CD8-positive, alpha-beta T cell (primary cell): ENCODE measurements at regions of chr14 and their contacts with region 1.

Region 1: GRCh38 chr14:60331201-60332045 is 82.4 kb downstream of the PPM1A start:
- DNase-seq: peak; percentile 51 to 86 (median 80)
- ATAC-seq: peak; percentile 80
- H3K4me3 ChIP-seq: peak overlapping the region; percentile 52 to 55
- H3K4me3 Mint-ChIP-seq: peak overlapping the region; percentile 98
- H3K27ac ChIP-seq: peak overlapping the region; percentile 36 to 47
- H3K27ac Mint-ChIP-seq: peak overlapping the region; percentile 94
- H3K4me1 ChIP-seq: peaks cover 9% of the 10 kb centered on the region
- H3K4me1 Mint-ChIP-seq: peaks cover 33% of the 10 kb centered on the region
- H3K27me3 ChIP-seq: no peaks in the 10 kb centered on the region
- H3K27me3 Mint-ChIP-seq: peaks cover 30% of the 10 kb centered on the region
- CTCF ChIP-seq: peak; percentile 87

Region 2: GRCh38 chr14:60064491-60065072 is 266.8 kb before region 1 on chr14:
- CTCF ChIA-PET with region 1: interaction called, 5 read pairs
- POLR2A ChIA-PET with region 1: no interaction called
- intact Hi-C with region 1: loop called in 1 of 2 experiments (anchors 5 kb)
- DNase-seq: peak in 2 of 9 experiments; percentile 53 to 66
- ATAC-seq: peak; percentile 80
- H3K4me3 ChIP-seq: no peak overlapping the region
- H3K4me3 Mint-ChIP-seq: no peak overlapping the region
- H3K27ac ChIP-seq: no peak overlapping the region
- H3K27ac Mint-ChIP-seq: no peak overlapping the region
- H3K4me1 ChIP-seq: no peaks in the 10 kb centered on the region
- H3K4me1 Mint-ChIP-seq: no peaks in the 10 kb centered on the region
- H3K27me3 ChIP-seq: no peaks in the 10 kb centered on the region
- H3K27me3 Mint-ChIP-seq: peaks cover 2% of the 10 kb centered on the region
- CTCF ChIP-seq: peak; percentile 71

Region 3: GRCh38 chr14:60266021-60266937 is 65.1 kb before region 1 on chr14:
- CTCF ChIA-PET with region 1: interaction called, 5 read pairs
- POLR2A ChIA-PET with region 1: no interaction called
- intact Hi-C with region 1: loop called in 1 of 2 experiments (anchors 5 kb)
- DNase-seq: peak in 5 of 9 experiments; percentile 22 to 57 (median 29)
- ATAC-seq: peak; percentile 61
- H3K4me3 ChIP-seq: no peak overlapping the region
- H3K4me3 Mint-ChIP-seq: no peak overlapping the region
- H3K27ac ChIP-seq: no peak overlapping the region
- H3K27ac Mint-ChIP-seq: no peak overlapping the region
- H3K4me1 ChIP-seq: peaks cover 6% of the 10 kb centered on the region
- H3K4me1 Mint-ChIP-seq: peaks cover 33% of the 10 kb centered on the region
- H3K27me3 ChIP-seq: no peaks in the 10 kb centered on the region
- H3K27me3 Mint-ChIP-seq: no peaks in the 10 kb centered on the region
- CTCF ChIP-seq: peak; percentile 75

Region 4: GRCh38 chr14:60309867-60310552 is 21.4 kb before region 1 on chr14:
- CTCF ChIA-PET with region 1: interaction called, 15 read pairs
- POLR2A ChIA-PET with region 1: no interaction called
- intact Hi-C with region 1: no loop called
- DNase-seq: no peak
- ATAC-seq: no peak
- H3K4me3 ChIP-seq: no peak overlapping the region
- H3K4me3 Mint-ChIP-seq: no peak overlapping the region
- H3K27ac ChIP-seq: no peak overlapping the region
- H3K27ac Mint-ChIP-seq: no peak overlapping the region
- H3K4me1 ChIP-seq: no peaks in the 10 kb centered on the region
- H3K4me1 Mint-ChIP-seq: no peaks in the 10 kb centered on the region
- H3K27me3 ChIP-seq: no peaks in the 10 kb centered on the region
- H3K27me3 Mint-ChIP-seq: peaks cover 3% of the 10 kb centered on the region
- CTCF ChIP-seq: no peak

Region 5: DNA sequence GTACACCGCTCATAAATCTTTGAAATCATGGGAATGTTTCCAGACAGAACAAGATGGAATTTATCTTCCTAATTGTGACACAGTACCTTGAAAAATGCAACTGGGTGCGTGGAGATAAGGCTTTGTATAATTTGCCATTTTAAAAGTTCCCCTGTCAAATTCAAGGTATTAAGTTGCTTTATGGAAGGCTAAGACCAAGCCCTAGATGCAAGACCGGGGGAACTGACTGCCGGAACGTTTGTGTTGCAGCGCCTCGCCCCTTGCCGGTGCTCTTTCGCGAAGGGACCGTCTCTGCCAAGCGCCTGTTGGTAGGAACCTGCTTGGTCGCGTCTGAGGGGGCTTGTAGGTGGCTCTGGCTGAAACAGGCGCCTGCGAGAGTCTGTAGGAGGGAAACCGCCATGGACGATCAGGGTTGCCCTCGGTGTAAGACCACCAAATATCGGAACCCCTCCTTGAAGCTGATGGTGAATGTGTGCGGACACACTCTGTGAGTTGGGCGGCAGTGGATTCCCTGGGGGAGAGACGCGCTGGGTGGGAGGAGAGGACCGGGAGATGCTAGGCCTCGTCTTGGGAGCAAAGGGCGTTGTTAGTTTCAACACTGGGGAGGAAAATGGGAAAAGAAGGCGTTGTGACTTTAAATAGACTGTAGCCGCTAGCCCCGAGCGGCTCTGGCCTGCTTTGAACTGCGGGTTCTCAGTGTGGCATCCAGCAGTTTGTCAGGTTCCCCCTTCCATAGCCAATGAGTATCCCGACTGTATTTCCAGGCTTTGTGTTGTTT is 403.2 kb after region 1 on chr14 and contains the start of gene MNAT1:
- CTCF ChIA-PET with region 1: no interaction called
- POLR2A ChIA-PET with region 1: no interaction called
- intact Hi-C with region 1: loop called in 1 of 2 experiments (anchors 5 kb)
- DNase-seq: peak; percentile 62 to 88 (median 78)
- ATAC-seq: peak; percentile 98
- H3K4me3 ChIP-seq: peak within 1 kb of the TSS; percentile 83 to 84
- H3K4me3 Mint-ChIP-seq: peak within 1 kb of the TSS; percentile 100
- H3K27ac ChIP-seq: peak within 1 kb of the TSS; percentile 40 to 56
- H3K27ac Mint-ChIP-seq: peak within 1 kb of the TSS; percentile 95
- H3K4me1 ChIP-seq: peaks cover 19% of the 10 kb centered on the region
- H3K4me1 Mint-ChIP-seq: peaks cover 36% of the 10 kb centered on the region
- H3K27me3 ChIP-seq: no peaks in the 10 kb centered on the region
- H3K27me3 Mint-ChIP-seq: peaks cover 12% of the 10 kb centered on the region
- CTCF ChIP-seq: no peak
- total RNA-seq, gene MNAT1: 12.0 to 14.5 TPM